HEK293T (cell line): ENCODE measurements at regions of chr7 and their contacts with region 1.

Region 1: DNA sequence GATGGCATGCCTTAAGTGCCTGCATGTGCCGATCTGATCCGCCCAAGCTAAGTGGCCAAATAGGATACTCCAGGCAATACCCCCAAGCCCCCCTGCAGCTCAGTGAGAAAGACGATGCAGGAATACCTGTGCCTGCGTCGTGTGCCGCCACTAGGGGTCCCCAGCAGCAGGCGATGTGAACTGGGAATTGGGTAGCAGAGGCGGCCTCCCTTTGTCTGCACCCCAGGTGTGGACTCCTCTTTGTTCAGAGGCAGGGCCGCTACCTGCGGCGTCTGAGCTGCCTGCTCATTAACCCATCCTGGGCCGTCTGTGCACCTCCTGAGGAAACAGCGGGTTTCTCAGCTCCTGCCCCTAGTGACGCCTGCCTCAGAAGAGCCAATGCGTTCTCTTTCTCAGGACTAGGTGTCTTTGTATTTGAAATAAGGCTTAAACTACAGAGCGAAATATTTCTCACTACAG is 4.8 kb upstream of the CHN2 start:
- DNase-seq: peak; percentile 75

Region 2: GRCh38 chr7:29154076-29154475 is 35.7 kb before region 1 on chr7:
- CTCF ChIA-PET with region 1: interaction called, 10 read pairs
- POLR2A ChIA-PET with region 1: no interaction called
- DNase-seq: no peak

Region 3: GRCh38 chr7:29177963-29178600 is 11.7 kb before region 1 on chr7:
- CTCF ChIA-PET with region 1: interaction called, 10 read pairs
- POLR2A ChIA-PET with region 1: interaction called, 3 read pairs
- DNase-seq: no peak

Region 4: DNA sequence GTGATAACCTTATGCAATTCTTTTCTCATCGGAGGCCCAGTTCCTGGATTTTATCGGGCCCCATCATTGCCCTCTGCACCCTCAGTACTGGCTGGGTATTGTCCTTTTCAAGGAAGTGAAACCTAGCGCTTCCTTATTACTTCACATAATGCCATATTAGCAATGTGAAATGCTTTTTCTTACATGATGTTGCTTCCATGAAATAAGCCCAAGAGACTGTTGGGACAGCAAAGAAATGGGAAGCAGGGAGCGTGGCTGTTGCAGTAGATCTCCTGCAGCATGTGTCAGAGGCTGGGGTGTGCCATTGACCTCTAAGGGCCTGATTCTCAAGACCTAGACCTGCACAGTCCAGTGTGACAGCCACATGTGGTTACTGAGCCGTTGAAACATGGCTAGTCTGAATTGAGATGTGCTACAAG is 12.9 kb after region 1 on chr7:
- CTCF ChIA-PET with region 1: interaction called, 11 read pairs
- POLR2A ChIA-PET with region 1: no interaction called
- DNase-seq: no peak

Region 5: GRCh38 chr7:29217113-29217512 is 27.3 kb after region 1 on chr7:
- CTCF ChIA-PET with region 1: interaction called, 10 read pairs
- POLR2A ChIA-PET with region 1: no interaction called
- DNase-seq: no peak

Region 6: GRCh38 chr7:29345600-29345999 is 155.8 kb after region 1 on chr7:
- CTCF ChIA-PET with region 1: interaction called, 17 read pairs
- POLR2A ChIA-PET with region 1: interaction called, 3 read pairs
- DNase-seq: peak; percentile 16